Left ventricle myocardium superior (tissue), 1 donor: ENCODE measurements at regions of chr5 and their contacts with region 1.

Region 1: DNA sequence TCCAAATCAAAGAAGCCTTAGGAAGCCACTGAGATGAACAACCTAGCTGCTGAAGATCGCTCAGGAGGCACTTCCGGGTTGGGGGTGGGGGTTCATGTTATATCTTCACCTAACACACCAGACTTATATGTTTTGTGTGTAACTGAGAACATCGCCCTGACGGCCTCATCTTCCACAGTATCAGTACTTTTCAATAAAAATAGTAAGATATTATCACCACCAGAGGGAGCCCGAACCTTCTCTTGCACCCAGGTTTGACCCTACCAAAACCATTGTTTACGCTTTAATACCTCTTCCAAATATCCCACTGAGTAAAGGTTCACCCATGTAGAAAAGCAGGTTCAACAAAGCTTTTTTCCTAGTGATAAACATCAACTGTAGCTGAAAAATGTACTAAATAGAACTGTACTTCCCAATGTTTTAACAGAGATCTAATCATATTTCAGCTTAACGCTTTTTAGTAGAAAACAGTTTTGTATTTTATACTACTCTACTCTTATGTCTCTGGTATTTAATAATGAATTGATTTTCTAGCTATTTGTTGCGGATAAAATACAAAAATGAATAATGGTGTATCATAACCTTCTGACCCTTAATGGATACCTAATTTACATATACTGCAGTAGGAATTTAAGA is 244.0 kb downstream of the EPB41L4A start:
- DNase-seq: no peak
- ATAC-seq: peak; percentile 68

Region 2: DNA sequence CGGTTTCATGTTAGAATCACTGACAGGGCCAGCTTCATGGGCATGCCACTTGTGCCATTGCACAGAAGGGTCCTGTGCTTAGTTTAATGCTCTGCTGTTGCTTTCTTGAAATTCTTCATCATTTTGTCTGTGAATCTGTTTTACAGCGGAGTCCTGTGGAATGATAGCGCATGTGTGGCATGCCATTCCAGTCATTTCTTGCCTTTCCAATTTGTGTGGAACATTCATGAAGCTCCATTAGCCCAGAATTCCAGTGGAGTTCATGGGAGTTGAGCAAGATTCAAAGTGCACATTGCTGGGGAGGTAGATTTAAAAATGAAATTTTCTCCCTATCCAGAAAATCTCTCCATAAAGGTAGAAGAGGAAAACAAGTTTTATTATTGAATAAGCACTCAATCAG is 374.7 kb before region 1 on chr5:
- intact Hi-C with region 1: no loop called
- DNase-seq: no peak
- ATAC-seq: no peak

Region 3: GRCh38 chr5:112419986-112420864 is 245.1 kb after region 1 on chr5:
- intact Hi-C with region 1: loop called (anchors 5 kb)
- DNase-seq: peak; percentile 92
- ATAC-seq: peak; percentile 93